ENCODE measurements at regions of chr5 and their contacts with region 1.

Region 1: GRCh38 chr5:39217365-39218281 is 1.7 kb downstream of the FYB1 start:
- DNase-seq: peak; percentile 78
- ATAC-seq: peak; percentile 65
- H3K4me3 Mint-ChIP-seq: peak overlapping the region; percentile 94
- H3K27ac Mint-ChIP-seq: peak overlapping the region; percentile 98
- H3K4me1 Mint-ChIP-seq: peaks cover 46% of the 10 kb centered on the region
- H3K27me3 Mint-ChIP-seq: no peaks in the 10 kb centered on the region

Region 2: DNA sequence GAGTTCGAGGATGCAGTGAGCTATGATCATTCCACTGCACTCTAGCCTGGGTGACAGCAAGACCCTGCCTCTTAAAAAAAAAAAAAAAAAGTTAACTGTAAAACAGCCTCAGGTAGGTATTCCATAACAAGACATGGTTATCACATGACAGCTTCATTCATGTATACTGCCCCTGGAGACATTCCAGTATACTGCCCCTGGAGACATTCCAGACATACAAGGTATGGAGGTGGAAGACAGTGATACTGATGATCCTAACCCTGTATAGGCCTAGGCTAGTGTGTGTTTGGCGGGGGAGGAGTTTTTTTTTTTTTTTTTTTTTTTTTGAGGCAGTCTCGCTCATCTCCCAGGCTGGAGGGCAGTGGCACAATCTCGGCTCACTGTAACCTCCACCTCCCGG is 249.0 kb before region 1 on chr5:
- POLR2A ChIA-PET with region 1: no interaction called
- DNase-seq: no peak
- ATAC-seq: no peak
- H3K4me3 Mint-ChIP-seq: no peak overlapping the region
- H3K27ac Mint-ChIP-seq: no peak overlapping the region
- H3K4me1 Mint-ChIP-seq: peaks cover 1% of the 10 kb centered on the region
- H3K27me3 Mint-ChIP-seq: no peaks in the 10 kb centered on the region

Region 3: GRCh38 chr5:39080597-39081204 is 136.9 kb before region 1 on chr5:
- POLR2A ChIA-PET with region 1: no interaction called
- DNase-seq: no peak
- ATAC-seq: no peak
- H3K4me3 Mint-ChIP-seq: no peak overlapping the region
- H3K27ac Mint-ChIP-seq: no peak overlapping the region
- H3K4me1 Mint-ChIP-seq: peaks cover 15% of the 10 kb centered on the region
- H3K27me3 Mint-ChIP-seq: peaks cover 43% of the 10 kb centered on the region

Region 4: GRCh38 chr5:39194466-39195136 is 23.0 kb before region 1 on chr5:
- POLR2A ChIA-PET with region 1: interaction called, 86 read pairs
- DNase-seq: no peak
- ATAC-seq: peak; percentile 15
- H3K4me3 Mint-ChIP-seq: peak overlapping the region; percentile 88
- H3K27ac Mint-ChIP-seq: peak overlapping the region; percentile 89
- H3K4me1 Mint-ChIP-seq: peaks cover 69% of the 10 kb centered on the region
- H3K27me3 Mint-ChIP-seq: no peaks in the 10 kb centered on the region

Region 5: GRCh38 chr5:39202597-39203274 is 14.9 kb before region 1 on chr5:
- POLR2A ChIA-PET with region 1: interaction called, 86 read pairs
- DNase-seq: peak; percentile 47
- ATAC-seq: peak; percentile 51
- H3K4me3 Mint-ChIP-seq: peak overlapping the region; percentile 91
- H3K27ac Mint-ChIP-seq: peak overlapping the region; percentile 96
- H3K4me1 Mint-ChIP-seq: peaks cover 32% of the 10 kb centered on the region
- H3K27me3 Mint-ChIP-seq: no peaks in the 10 kb centered on the region

Region 6: DNA sequence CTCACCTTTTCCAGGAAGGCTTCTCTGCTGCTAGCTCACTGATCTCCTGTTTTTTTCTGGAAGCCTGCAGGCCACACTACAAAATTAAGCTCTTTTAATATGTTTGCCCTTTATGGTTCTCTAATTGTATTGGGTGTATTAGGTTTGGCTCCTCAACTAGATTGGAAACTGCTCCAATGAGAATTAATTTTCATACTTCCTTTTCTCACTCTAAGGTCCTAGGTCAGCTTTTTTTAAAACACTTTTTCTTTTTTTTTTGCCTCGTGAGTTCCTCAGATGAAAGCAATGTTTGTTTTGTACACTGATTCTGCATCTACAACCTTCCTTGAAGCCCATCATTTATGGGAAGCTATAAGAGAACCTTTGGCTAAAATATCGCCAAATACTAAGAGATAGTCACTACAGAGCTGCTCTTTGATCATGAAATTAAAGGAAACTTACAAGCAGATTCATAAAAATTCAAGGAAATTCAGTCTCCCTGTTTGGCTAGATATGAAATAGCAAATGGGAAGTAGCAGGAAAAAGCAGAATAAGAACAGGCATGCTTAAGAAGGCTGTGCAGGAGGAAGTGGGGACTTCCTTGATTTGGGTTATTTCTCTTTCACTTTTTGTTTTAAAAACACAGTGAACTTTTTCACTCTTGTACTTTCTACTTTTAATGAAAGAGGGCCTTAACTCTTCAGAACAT is 56.9 kb after region 1 on chr5:
- POLR2A ChIA-PET with region 1: interaction called, 10 read pairs
- DNase-seq: no peak
- ATAC-seq: peak; percentile 46
- H3K4me3 Mint-ChIP-seq: peak overlapping the region; percentile 85
- H3K27ac Mint-ChIP-seq: peak overlapping the region; percentile 95
- H3K4me1 Mint-ChIP-seq: peaks cover 32% of the 10 kb centered on the region
- H3K27me3 Mint-ChIP-seq: no peaks in the 10 kb centered on the region

Region 7: GRCh38 chr5:39283231-39283818 is 65.7 kb after region 1 on chr5:
- POLR2A ChIA-PET with region 1: interaction called, 23 read pairs
- DNase-seq: peak; percentile 35
- ATAC-seq: peak; percentile 97
- H3K4me3 Mint-ChIP-seq: no peak overlapping the region
- H3K27ac Mint-ChIP-seq: peak overlapping the region; percentile 2
- H3K4me1 Mint-ChIP-seq: peaks cover 15% of the 10 kb centered on the region
- H3K27me3 Mint-ChIP-seq: peaks cover 6% of the 10 kb centered on the region